Uterus (tissue), 4 donors: ENCODE measurements at regions of chrX and their contacts with region 1.

Region 1: GRCh38 chrX:96798982-96799381 is 84.7 kb upstream of the RPA4 start:
- DNase-seq: no peak
- H3K4me3 ChIP-seq: no peak overlapping the region
- H3K27ac ChIP-seq: no peak overlapping the region
- H3K4me1 ChIP-seq: no peaks in the 10 kb centered on the region
- H3K27me3 ChIP-seq: peaks cover 0 to 4% of the 10 kb centered on the region in 2 donors
- CTCF ChIP-seq: no peak
- POLR2A ChIP-seq: no peak

Region 2: DNA sequence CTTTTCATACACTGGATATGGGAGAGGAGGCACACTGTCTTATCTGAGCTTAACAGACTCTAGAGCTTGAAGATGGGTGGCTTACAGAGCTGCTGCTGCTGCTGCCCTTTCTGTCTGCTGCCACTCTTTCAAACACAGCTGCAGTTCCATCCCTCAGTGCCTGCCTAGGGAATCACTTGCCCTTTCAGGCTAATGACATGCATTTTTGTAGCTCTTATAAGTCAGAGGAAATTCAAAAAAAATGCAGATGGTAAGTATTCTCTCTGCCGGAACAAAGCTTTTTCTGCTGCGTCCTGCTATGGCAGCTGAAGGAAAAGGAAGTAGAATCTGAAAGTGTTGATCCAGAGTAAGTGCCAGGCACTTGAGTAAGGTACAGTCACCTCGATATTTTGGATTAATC is 574.7 kb before region 1 on chrX:
- intact Hi-C with region 1: loop called (anchors 5 kb)
- DNase-seq: no peak
- H3K4me3 ChIP-seq: no peak overlapping the region
- H3K27ac ChIP-seq: no peak overlapping the region
- H3K4me1 ChIP-seq: no peaks in the 10 kb centered on the region
- H3K27me3 ChIP-seq: peaks cover 0 to 5% of the 10 kb centered on the region in 2 donors
- CTCF ChIP-seq: no peak
- POLR2A ChIP-seq: no peak